A549 (cell line): ENCODE measurements at regions of chr17 and their contacts with region 1.

Region 1: DNA sequence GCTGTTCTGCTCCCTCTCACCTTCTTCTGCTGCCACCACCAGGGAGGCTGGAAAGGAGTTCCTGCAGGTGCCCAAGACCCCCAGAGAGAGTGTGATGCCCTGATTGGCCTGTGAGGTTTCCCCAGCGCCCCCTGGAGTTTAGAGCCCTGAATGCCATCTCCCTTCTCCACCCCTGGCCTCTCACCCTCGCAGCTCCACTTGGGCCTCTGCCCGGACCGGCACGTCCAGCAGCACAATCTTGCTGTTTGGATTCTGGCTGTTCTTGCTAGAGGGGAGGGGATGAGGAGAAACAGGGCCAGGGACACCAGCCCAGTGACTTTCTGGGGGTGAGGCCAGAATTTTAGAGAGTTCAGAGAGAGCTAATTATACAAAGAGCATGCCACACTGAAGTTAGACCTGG is 12.5 kb upstream of the FAM171A2 start:
- DNase-seq: peak in 1 of 2 experiments; percentile 80
- ATAC-seq: peak; percentile 36 to 82; a peak in 4 of 6 replicates
- H3K4me3 ChIP-seq: no peak overlapping the region
- H3K27ac ChIP-seq: no peak overlapping the region
- H3K4me1 ChIP-seq: no peaks in the 10 kb centered on the region
- CTCF ChIP-seq: peak; percentile 38; the same call in 2 of the 3 replicates
- EP300 ChIP-seq: no peak
- POLR2A ChIP-seq: no peak
- RAD21 ChIP-seq: no peak

Region 2: DNA sequence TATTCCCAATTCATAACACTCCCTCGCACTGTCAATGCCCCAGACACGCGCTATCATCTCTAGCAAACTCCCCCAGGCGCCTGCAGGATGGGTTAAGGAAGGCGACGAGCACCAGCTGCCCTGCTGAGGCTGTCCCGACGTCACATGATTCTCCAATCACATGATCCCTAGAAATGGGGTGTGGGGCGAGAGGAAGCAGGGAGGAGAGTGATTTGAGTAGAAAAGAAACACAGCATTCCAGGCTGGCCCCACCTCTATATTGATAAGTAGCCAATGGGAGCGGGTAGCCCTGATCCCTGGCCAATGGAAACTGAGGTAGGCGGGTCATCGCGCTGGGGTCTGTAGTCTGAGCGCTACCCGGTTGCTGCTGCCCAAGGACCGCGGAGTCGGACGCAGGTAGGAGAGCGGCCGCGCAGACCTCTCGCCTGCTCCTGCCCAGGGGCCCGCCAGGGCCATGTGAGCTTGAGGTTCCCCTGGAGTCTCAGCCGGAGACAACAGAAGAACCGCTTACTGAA is 31.1 kb before region 1 on chr17 and contains the start of gene GRN:
- CTCF ChIA-PET with region 1: interaction called, 18 read pairs
- POLR2A ChIA-PET with region 1: no interaction called
- DNase-seq: peak; percentile 100
- ATAC-seq: peak; percentile 89 to 99
- H3K4me3 ChIP-seq: peak within 1 kb of the TSS; percentile 92
- H3K27ac ChIP-seq: peak within 1 kb of the TSS; percentile 81 to 85
- H3K4me1 ChIP-seq: peaks cover 9% of the 10 kb centered on the region
- CTCF ChIP-seq: no peak
- EP300 ChIP-seq: no peak
- POLR2A ChIP-seq: peak; percentile 73
- RAD21 ChIP-seq: no peak
- polyA plus RNA-seq, gene GRN: 111 and 147 TPM in 2 replicates